ENCODE measurements at regions of chr7 and their contacts with region 1.

Region 1: DNA sequence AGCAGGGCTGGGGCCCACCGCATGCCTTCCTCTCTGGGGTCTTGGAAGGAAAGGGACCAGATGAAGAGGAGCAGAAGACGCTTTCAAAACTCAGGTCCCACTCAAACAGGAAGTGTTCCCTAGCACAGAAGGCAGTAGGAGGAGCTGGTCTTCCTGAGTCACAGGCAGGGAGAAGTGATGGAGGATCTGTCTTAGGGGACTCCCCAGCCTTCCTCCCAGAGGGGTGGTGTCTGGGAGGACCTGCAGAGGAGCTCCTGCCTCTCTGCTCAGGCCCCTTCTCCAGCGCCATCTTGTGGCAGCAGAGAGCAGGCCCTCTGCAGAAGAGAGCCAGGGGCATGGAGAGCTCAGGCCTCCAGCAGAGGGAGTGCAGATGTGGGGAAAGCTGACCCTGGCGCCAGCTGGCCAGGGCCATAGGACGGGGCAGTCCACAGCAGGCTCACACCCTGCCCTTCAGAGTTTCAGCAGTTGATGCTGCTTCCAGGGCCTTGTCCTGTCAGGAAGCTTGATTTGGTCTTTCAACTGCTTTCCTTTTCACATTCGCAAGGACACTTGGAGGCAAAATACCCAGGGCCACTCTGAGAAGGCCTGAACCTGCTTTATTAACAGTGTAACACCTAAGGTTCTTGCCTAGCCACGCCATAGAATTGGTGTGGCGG is 62.2 kb upstream of the TARP start:
- DNase-seq: peak; percentile 59 to 92 (median 73)
- ATAC-seq: peak; percentile 93
- H3K4me3 ChIP-seq: peak overlapping the region; percentile 45
- H3K4me3 Mint-ChIP-seq: peak overlapping the region; percentile 78
- H3K27ac ChIP-seq: no peak overlapping the region
- H3K27ac Mint-ChIP-seq: peak overlapping the region; percentile 84
- H3K4me1 ChIP-seq: peaks cover 33% of the 10 kb centered on the region
- H3K4me1 Mint-ChIP-seq: peaks cover 44% of the 10 kb centered on the region
- H3K27me3 ChIP-seq: no peaks in the 10 kb centered on the region
- H3K27me3 Mint-ChIP-seq: no peaks in the 10 kb centered on the region
- CTCF ChIP-seq: peak; percentile 74

Region 2: GRCh38 chr7:38222481-38223096 is 113.0 kb before region 1 on chr7:
- CTCF ChIA-PET with region 1: interaction called, 21 read pairs
- POLR2A ChIA-PET with region 1: interaction called, 3 read pairs
- intact Hi-C with region 1: loop called in 1 of 2 experiments (anchors 5 kb)
- DNase-seq: peak in 5 of 14 experiments; percentile 7 to 82 (median 78)
- ATAC-seq: peak; percentile 92
- H3K4me3 ChIP-seq: no peak overlapping the region
- H3K4me3 Mint-ChIP-seq: no peak overlapping the region
- H3K27ac ChIP-seq: no peak overlapping the region
- H3K27ac Mint-ChIP-seq: peak overlapping the region; percentile 2
- H3K4me1 ChIP-seq: peaks cover 26% of the 10 kb centered on the region
- H3K4me1 Mint-ChIP-seq: peaks cover 11% of the 10 kb centered on the region
- H3K27me3 ChIP-seq: no peaks in the 10 kb centered on the region
- H3K27me3 Mint-ChIP-seq: no peaks in the 10 kb centered on the region
- CTCF ChIP-seq: peak; percentile 93

Region 3: GRCh38 chr7:38318803-38319416 is 16.7 kb before region 1 on chr7:
- CTCF ChIA-PET with region 1: interaction called, 11 read pairs
- POLR2A ChIA-PET with region 1: interaction called, 7 read pairs
- intact Hi-C with region 1: no loop called
- DNase-seq: peak in 4 of 14 experiments; percentile 36 to 59 (median 56)
- ATAC-seq: peak; percentile 56
- H3K4me3 ChIP-seq: peak overlapping the region; percentile 7
- H3K4me3 Mint-ChIP-seq: peak overlapping the region; percentile 62
- H3K27ac ChIP-seq: peak overlapping the region; percentile 15 to 21
- H3K27ac Mint-ChIP-seq: peak overlapping the region; percentile 72
- H3K4me1 ChIP-seq: peaks cover 19% of the 10 kb centered on the region
- H3K4me1 Mint-ChIP-seq: peaks cover 29% of the 10 kb centered on the region
- H3K27me3 ChIP-seq: no peaks in the 10 kb centered on the region
- H3K27me3 Mint-ChIP-seq: no peaks in the 10 kb centered on the region
- CTCF ChIP-seq: peak; percentile 43

Region 4: GRCh38 chr7:38351601-38352000 is 16.0 kb after region 1 on chr7:
- CTCF ChIA-PET with region 1: interaction called, 23 read pairs
- POLR2A ChIA-PET with region 1: no interaction called
- intact Hi-C with region 1: no loop called
- DNase-seq: no peak
- ATAC-seq: no peak
- H3K4me3 ChIP-seq: peak overlapping the region; percentile 34
- H3K4me3 Mint-ChIP-seq: peak overlapping the region; percentile 86
- H3K27ac ChIP-seq: no peak overlapping the region
- H3K27ac Mint-ChIP-seq: peak overlapping the region; percentile 94
- H3K4me1 ChIP-seq: peaks cover 22% of the 10 kb centered on the region
- H3K4me1 Mint-ChIP-seq: peaks cover 35% of the 10 kb centered on the region
- H3K27me3 ChIP-seq: no peaks in the 10 kb centered on the region
- H3K27me3 Mint-ChIP-seq: no peaks in the 10 kb centered on the region
- CTCF ChIP-seq: no peak

Region 5: DNA sequence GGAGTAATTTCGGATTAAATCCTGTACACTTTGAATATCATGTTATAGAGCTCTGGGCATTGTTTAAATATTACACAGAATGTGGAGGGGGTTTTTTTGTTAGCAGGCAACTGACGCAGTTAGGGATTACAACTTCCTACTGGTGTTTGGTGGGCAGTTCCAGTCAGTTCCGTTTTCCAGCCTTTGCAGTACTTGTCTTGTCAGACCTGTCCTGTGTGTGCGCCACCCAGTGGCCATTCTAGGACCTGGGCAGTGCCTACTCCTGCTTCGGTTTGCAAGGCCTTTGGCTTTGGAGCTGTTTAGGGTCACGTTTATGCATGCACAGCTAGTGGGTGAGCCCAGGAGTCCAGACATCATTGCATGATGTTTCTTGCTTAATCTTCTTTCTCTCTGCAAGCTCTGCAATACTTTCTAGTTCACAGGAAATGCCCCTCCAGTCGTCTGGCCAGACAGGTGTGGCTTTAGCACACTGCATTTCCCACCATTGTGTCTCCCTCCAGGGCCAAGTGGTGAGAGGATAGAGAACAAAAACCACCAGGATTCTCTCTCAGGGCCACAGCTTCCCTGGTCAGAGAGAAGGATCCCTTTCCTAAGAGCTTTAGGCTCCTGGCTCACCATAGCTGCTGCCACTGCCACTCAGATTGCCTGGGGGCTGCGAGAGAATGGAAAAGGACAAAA is 34.3 kb after region 1 on chr7:
- CTCF ChIA-PET with region 1: interaction called, 40 read pairs
- POLR2A ChIA-PET with region 1: interaction called, 8 read pairs
- intact Hi-C with region 1: no loop called
- DNase-seq: peak; percentile 53 to 89 (median 76)
- ATAC-seq: peak; percentile 60
- H3K4me3 ChIP-seq: no peak overlapping the region
- H3K4me3 Mint-ChIP-seq: peak overlapping the region; percentile 59
- H3K27ac ChIP-seq: peak overlapping the region in 1 of 2 donors; percentile 52
- H3K27ac Mint-ChIP-seq: peak overlapping the region; percentile 85
- H3K4me1 ChIP-seq: peaks cover 41% of the 10 kb centered on the region
- H3K4me1 Mint-ChIP-seq: peaks cover 72% of the 10 kb centered on the region
- H3K27me3 ChIP-seq: no peaks in the 10 kb centered on the region
- H3K27me3 Mint-ChIP-seq: no peaks in the 10 kb centered on the region
- CTCF ChIP-seq: peak; percentile 85

Region 6: GRCh38 chr7:38375453-38375852 is 39.8 kb after region 1 on chr7:
- CTCF ChIA-PET with region 1: interaction called, 40 read pairs
- POLR2A ChIA-PET with region 1: interaction called, 4 read pairs
- intact Hi-C with region 1: no loop called
- DNase-seq: no peak
- ATAC-seq: no peak
- H3K4me3 ChIP-seq: no peak overlapping the region
- H3K4me3 Mint-ChIP-seq: no peak overlapping the region
- H3K27ac ChIP-seq: no peak overlapping the region
- H3K27ac Mint-ChIP-seq: peak overlapping the region; percentile 11
- H3K4me1 ChIP-seq: peaks cover 6% of the 10 kb centered on the region
- H3K4me1 Mint-ChIP-seq: peaks cover 23% of the 10 kb centered on the region
- H3K27me3 ChIP-seq: no peaks in the 10 kb centered on the region
- H3K27me3 Mint-ChIP-seq: no peaks in the 10 kb centered on the region
- CTCF ChIP-seq: no peak

Measured in CD4-positive, alpha-beta T cell (primary cell).